ENCODE measurements at regions of chr15 and their contacts with region 1.

Region 1: DNA sequence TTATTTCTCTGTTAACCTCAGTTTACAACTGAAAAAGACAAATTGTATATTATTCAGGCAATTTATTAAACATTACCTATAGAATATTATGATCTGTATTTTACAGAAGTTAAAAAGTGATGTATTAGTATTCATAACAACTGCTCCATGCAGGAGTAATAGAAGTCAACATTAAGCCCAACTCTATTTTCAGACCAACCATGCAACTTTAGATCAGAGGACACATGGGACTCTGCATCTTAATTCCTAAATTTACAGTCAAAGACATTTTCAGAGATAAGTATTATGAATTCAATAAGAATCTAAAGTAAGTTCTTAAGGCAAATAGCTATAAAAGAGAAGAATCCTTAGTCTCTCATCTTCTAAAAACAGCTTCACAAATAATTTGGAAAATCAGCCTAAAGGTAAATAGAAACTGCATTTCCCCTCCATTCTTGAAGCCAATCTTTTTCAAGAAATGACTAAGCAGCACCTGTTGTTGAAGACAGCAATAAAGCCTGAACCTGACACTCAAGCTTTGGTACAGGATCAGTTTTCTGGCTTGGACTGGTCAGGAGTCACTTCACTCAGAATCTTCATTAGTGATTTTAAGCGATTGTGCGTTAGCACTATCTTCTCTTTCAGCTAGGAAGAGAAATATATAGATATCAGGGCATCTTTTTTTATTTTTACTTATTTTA is 23.0 kb downstream of the OIP5 start:
- DNase-seq: no peak
- ATAC-seq: no peak
- H3K4me3 Mint-ChIP-seq: no peak overlapping the region
- H3K27ac Mint-ChIP-seq: no peak overlapping the region
- H3K4me1 Mint-ChIP-seq: no peaks in the 10 kb centered on the region
- H3K27me3 Mint-ChIP-seq: no peaks in the 10 kb centered on the region

Region 2: GRCh38 chr15:40190591-40190990 is 1118.8 kb before region 1 on chr15:
- CTCF ChIA-PET with region 1: no interaction called
- POLR2A ChIA-PET with region 1: no interaction called
- intact Hi-C with region 1: no loop called
- DNase-seq: no peak
- ATAC-seq: no peak
- H3K4me3 Mint-ChIP-seq: no peak overlapping the region
- H3K27ac Mint-ChIP-seq: no peak overlapping the region
- H3K4me1 Mint-ChIP-seq: no peaks in the 10 kb centered on the region
- H3K27me3 Mint-ChIP-seq: no peaks in the 10 kb centered on the region

Region 3: DNA sequence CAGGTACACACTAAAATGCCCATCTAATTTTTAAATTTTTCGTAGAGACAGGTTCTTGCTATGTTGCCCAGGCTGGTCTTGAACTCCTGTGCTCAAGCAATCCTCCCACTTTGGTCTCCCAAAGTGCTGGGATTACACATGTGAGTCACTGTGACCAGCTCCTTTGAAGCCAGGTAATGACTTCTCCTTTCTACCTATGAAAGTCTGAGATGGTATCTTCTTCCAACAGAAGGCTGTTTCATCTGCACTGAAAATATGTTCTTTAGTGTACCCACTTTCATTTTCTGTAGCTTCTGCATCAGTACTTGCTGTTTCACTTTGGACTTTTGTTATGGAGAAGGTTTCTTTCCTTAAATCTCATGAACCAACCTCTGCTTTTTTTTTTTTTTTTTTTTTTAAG is 14.2 kb after region 1 on chr15:
- CTCF ChIA-PET with region 1: interaction called, 10 read pairs
- POLR2A ChIA-PET with region 1: no interaction called
- intact Hi-C with region 1: no loop called
- DNase-seq: peak; percentile 36
- ATAC-seq: peak; percentile 96
- H3K4me3 Mint-ChIP-seq: no peak overlapping the region
- H3K27ac Mint-ChIP-seq: no peak overlapping the region
- H3K4me1 Mint-ChIP-seq: peaks cover 17% of the 10 kb centered on the region
- H3K27me3 Mint-ChIP-seq: no peaks in the 10 kb centered on the region

Measured in activated CD4-positive, alpha-beta T cell treated with anti-CD3 and anti-CD28 coated beads for 36 hours (primary cell).